Mammary epithelial cell (primary cell): ENCODE measurements at regions of chr6 and their contacts with region 1.

Region 1: DNA sequence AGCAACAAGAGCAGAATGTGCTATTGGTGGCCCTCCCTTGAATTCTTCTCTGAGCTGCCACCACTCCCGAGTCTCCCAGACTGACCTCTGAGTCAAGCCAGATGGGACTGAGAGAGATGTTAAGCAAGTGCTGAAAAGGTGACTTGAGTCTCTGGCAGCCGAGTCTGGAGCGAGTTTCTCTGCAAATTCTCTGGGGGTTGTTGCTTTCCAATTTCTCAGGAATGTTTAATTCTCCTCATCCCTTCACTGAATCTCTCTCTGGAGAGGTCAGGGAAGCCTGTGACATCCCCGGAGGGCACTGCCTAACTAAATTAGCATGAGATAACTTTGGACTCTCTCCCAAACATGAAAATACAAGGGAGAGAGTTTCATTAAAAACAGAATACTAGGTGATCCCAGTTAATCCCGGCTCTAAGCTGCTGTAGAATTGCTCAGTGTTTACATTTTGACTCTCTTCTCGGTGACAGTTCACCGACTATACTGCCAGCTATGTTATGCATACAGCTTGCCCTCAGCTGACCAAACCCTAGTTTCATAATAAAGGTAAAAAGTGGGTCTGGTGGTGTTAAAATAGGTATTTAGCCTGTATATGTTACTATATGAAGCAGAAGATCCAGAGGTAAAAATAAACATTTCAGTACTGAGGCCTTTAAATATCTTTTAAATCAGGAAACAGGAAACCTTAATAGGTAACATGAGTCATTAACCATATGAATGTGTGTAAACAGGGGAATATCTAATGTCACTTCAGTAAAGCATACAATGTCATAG is 158.0 kb downstream of the FOXC1 start:
- DNase-seq: peak; percentile 50
- H3K4me3 ChIP-seq: no peak overlapping the region
- H3K27ac ChIP-seq: peak overlapping the region; percentile 44
- H3K4me1 ChIP-seq: peaks cover 43% of the 10 kb centered on the region
- H3K27me3 ChIP-seq: no peaks in the 10 kb centered on the region
- CTCF ChIP-seq: no peak

Region 2: GRCh38 chr6:1624851-1625781 is 142.6 kb before region 1 on chr6:
- CTCF ChIA-PET with region 1: no interaction called
- dilution Hi-C with region 1: loop called (anchors 5 kb)
- in situ Hi-C with region 1: no loop called
- intact Hi-C with region 1: no loop called
- DNase-seq: peak; percentile 61
- H3K4me3 ChIP-seq: peak overlapping the region; percentile 54 to 74 (median 70)
- H3K27ac ChIP-seq: peak overlapping the region; percentile 35
- H3K4me1 ChIP-seq: peaks cover 11% of the 10 kb centered on the region
- H3K27me3 ChIP-seq: no peaks in the 10 kb centered on the region
- CTCF ChIP-seq: no peak

Region 3: DNA sequence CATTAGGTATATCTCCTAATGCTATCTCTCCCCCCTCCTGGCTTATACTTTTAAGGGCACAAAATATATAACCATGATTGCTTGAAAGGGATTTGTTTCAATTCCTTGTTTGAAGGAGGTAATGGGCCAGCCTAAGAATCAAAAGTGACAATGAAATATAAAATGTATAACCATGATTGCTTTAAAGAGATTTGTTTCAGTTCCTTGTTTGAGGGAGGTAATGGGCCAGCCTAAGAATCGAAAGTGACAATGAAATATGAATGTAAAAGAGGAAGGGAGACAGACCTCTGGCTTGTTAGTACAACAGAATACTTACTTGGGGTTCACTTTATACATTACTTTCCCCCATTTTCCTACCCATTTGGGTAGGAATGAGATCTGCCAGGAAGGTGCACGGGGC is 102.5 kb before region 1 on chr6:
- CTCF ChIA-PET with region 1: no interaction called
- dilution Hi-C with region 1: no loop called
- in situ Hi-C with region 1: no loop called
- intact Hi-C with region 1: no loop called
- DNase-seq: no peak
- H3K4me3 ChIP-seq: no peak overlapping the region
- H3K27ac ChIP-seq: no peak overlapping the region
- H3K4me1 ChIP-seq: peaks cover 3% of the 10 kb centered on the region
- H3K27me3 ChIP-seq: no peaks in the 10 kb centered on the region
- CTCF ChIP-seq: no peak

Region 4: GRCh38 chr6:1679687-1680065 is 88.0 kb before region 1 on chr6:
- CTCF ChIA-PET with region 1: no interaction called
- dilution Hi-C with region 1: loop called (anchors 5 kb)
- in situ Hi-C with region 1: no loop called
- intact Hi-C with region 1: no loop called
- DNase-seq: peak; percentile 42
- H3K4me3 ChIP-seq: no peak overlapping the region
- H3K27ac ChIP-seq: no peak overlapping the region
- H3K4me1 ChIP-seq: peaks cover 3% of the 10 kb centered on the region
- H3K27me3 ChIP-seq: no peaks in the 10 kb centered on the region
- CTCF ChIP-seq: no peak

Region 5: DNA sequence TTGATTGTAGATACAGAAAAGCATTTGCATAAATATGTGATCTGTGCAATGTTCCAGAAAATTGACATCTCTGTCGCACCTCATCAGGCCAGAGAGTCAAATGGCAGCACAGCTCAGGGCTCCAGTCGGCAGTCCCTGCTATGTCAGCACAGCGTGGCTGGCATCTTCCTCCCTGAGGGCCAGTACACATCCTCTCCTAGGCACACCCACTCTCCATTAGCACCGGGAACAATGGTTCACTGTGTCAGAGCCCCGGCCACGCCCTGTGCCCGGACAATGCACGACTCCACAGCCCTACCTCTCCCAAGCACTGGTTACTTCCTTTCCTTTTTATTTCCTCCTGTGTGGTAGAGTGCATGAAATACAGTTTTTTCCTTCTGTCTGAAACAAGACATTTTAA is 43.0 kb before region 1 on chr6:
- CTCF ChIA-PET with region 1: no interaction called
- dilution Hi-C with region 1: loop called (anchors 5 kb)
- in situ Hi-C with region 1: no loop called
- intact Hi-C with region 1: no loop called
- DNase-seq: peak; percentile 91
- H3K4me3 ChIP-seq: no peak overlapping the region
- H3K27ac ChIP-seq: peak overlapping the region; percentile 93
- H3K4me1 ChIP-seq: peaks cover 31% of the 10 kb centered on the region
- H3K27me3 ChIP-seq: no peaks in the 10 kb centered on the region
- CTCF ChIP-seq: no peak